Naive thymus-derived CD4-positive, alpha-beta T cell (primary cell): ENCODE measurements at regions of chr1 and their contacts with region 1.

Region 1: GRCh38 chr1:44721485-44722361 is 9.2 kb downstream of the RNU5D-1 start:
- DNase-seq: peak in 8 of 9 donors; percentile 62 to 84 (median 72)
- ATAC-seq: peak; percentile 92
- H3K4me3 ChIP-seq: peak overlapping the region; percentile 15
- H3K4me3 Mint-ChIP-seq: peak overlapping the region; percentile 53 to 87 (median 80)
- H3K27ac ChIP-seq: peak overlapping the region; percentile 64
- H3K27ac Mint-ChIP-seq: peak overlapping the region; percentile 74 to 98 (median 95)
- H3K4me1 ChIP-seq: peaks cover 26 to 73% of the 10 kb centered on the region in 2 donors
- H3K4me1 Mint-ChIP-seq: peaks cover 52 to 85% (median 74%) of the 10 kb centered on the region in 7 donors
- H3K27me3 ChIP-seq: no peaks in the 10 kb centered on the region
- H3K27me3 Mint-ChIP-seq: no peaks in the 10 kb centered on the region

Region 2: DNA sequence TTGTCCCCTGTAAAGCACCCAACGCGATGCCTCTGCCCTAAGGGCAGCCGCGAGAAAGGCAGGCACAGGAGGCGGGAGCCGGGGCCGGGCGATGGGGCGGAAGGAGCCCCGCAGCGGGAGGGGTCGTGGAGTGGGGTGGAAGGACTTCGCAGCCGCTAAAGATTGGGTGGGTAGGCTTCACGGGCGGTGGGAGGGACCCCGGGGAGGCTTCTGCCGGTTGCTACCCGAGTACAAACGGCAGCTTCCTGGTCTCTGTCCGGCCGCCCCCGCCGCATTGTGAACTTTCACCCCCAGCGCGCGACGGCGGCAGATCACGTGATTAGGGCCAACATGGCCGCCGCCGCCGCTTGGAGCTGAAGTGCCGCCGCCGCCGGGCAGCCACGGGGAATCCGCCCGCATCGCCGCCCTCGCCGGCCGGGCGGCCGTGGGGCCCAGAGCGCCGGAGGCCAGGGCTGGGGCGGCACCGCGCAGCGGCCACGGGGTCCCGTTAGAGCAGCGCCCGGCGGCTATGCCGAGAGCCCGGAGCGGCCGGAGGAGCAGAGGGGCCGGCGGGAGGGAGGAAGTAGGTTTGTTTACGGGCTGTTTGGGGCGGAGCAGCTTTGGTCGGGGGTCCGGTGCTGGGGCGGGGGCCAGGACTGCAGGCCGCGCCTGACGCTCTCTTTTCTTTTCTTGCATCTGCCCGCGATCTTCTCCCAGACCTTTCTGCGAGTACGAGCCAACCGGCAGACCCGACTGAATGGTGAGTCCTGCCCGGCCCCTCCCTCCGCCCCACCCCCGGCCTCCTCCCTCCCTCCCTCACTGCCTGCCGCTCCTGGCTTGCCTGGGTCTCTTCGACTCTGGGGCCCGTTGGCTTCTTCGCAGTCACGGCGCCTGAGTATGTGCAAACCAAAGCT is 89.8 kb before region 1 on chr1:
- CTCF ChIA-PET with region 1: no interaction called
- POLR2A ChIA-PET with region 1: interaction called, 12 read pairs
- intact Hi-C with region 1: no loop called
- DNase-seq: peak; percentile 80 to 92 (median 87)
- ATAC-seq: peak; percentile 87
- H3K4me3 ChIP-seq: peak overlapping the region; percentile 70
- H3K4me3 Mint-ChIP-seq: peak overlapping the region; percentile 69 to 95 (median 90)
- H3K27ac ChIP-seq: peak overlapping the region; percentile 85
- H3K27ac Mint-ChIP-seq: peak overlapping the region; percentile 46 to 99 (median 97)
- H3K4me1 ChIP-seq: peaks cover 8 to 13% of the 10 kb centered on the region in 2 donors
- H3K4me1 Mint-ChIP-seq: peaks cover 26 to 50% (median 39%) of the 10 kb centered on the region in 7 donors
- H3K27me3 ChIP-seq: no peaks in the 10 kb centered on the region
- H3K27me3 Mint-ChIP-seq: no peaks in the 10 kb centered on the region

Region 3: GRCh38 chr1:44696789-44697345 is 24.9 kb before region 1 on chr1:
- CTCF ChIA-PET with region 1: interaction called, 3 read pairs
- POLR2A ChIA-PET with region 1: interaction called, 15 read pairs
- intact Hi-C with region 1: no loop called
- DNase-seq: peak in 8 of 9 donors; percentile 20 to 58 (median 47)
- ATAC-seq: peak; percentile 92
- H3K4me3 ChIP-seq: no peak overlapping the region
- H3K4me3 Mint-ChIP-seq: peak overlapping the region; percentile 42 to 71 (median 62)
- H3K27ac ChIP-seq: peak overlapping the region; percentile 71
- H3K27ac Mint-ChIP-seq: peak overlapping the region; percentile 69 to 93 (median 84)
- H3K4me1 ChIP-seq: peaks cover 6 to 15% of the 10 kb centered on the region in 2 donors
- H3K4me1 Mint-ChIP-seq: peaks cover 13 to 26% (median 17%) of the 10 kb centered on the region in 7 donors
- H3K27me3 ChIP-seq: no peaks in the 10 kb centered on the region
- H3K27me3 Mint-ChIP-seq: no peaks in the 10 kb centered on the region

Region 4: GRCh38 chr1:44739361-44740178 is 17.8 kb after region 1 on chr1 and contains the start of gene KIF2C:
- CTCF ChIA-PET with region 1: interaction called, 3 read pairs
- POLR2A ChIA-PET with region 1: interaction called, 239 read pairs
- intact Hi-C with region 1: loop called in 1 of 2 experiments (anchors 1 kb)
- DNase-seq: peak; percentile 87 to 96 (median 94)
- ATAC-seq: peak; percentile 100
- H3K4me3 ChIP-seq: peak within 1 kb of the TSS; percentile 79
- H3K4me3 Mint-ChIP-seq: peak within 1 kb of the TSS; percentile 84 to 99 (median 94)
- H3K27ac ChIP-seq: peak within 1 kb of the TSS; percentile 84
- H3K27ac Mint-ChIP-seq: peak within 1 kb of the TSS; percentile 86 to 97 (median 95)
- H3K4me1 ChIP-seq: peaks cover 5 to 7% of the 10 kb centered on the region in 2 donors
- H3K4me1 Mint-ChIP-seq: peaks cover 9 to 39% (median 19%) of the 10 kb centered on the region in 7 donors
- H3K27me3 ChIP-seq: no peaks in the 10 kb centered on the region
- H3K27me3 Mint-ChIP-seq: no peaks in the 10 kb centered on the region
- total RNA-seq, gene KIF2C: 0.32 to 69.3 (median 1.1) TPM

Region 5: GRCh38 chr1:44807262-44808062 is 85.7 kb after region 1 on chr1 and contains the start of gene DYNLT4:
- CTCF ChIA-PET with region 1: no interaction called
- POLR2A ChIA-PET with region 1: interaction called, 45 read pairs
- intact Hi-C with region 1: no loop called
- DNase-seq: peak; percentile 78 to 96 (median 95)
- ATAC-seq: peak; percentile 68
- H3K4me3 ChIP-seq: peak within 1 kb of the TSS; percentile 48
- H3K4me3 Mint-ChIP-seq: peak within 1 kb of the TSS; percentile 63 to 90 (median 80)
- H3K27ac ChIP-seq: peak within 1 kb of the TSS; percentile 91
- H3K27ac Mint-ChIP-seq: peak within 1 kb of the TSS; percentile 98 to 100 (median 99)
- H3K4me1 ChIP-seq: peaks cover 66 to 67% of the 10 kb centered on the region in 2 donors
- H3K4me1 Mint-ChIP-seq: peaks cover 53 to 84% (median 77%) of the 10 kb centered on the region in 7 donors
- H3K27me3 ChIP-seq: no peaks in the 10 kb centered on the region
- H3K27me3 Mint-ChIP-seq: peaks cover 0 to 3% (median 0%) of the 10 kb centered on the region in 5 donors
- total RNA-seq, gene DYNLT4: 0.31 to 9.7 (median 0.87) TPM

Region 6: DNA sequence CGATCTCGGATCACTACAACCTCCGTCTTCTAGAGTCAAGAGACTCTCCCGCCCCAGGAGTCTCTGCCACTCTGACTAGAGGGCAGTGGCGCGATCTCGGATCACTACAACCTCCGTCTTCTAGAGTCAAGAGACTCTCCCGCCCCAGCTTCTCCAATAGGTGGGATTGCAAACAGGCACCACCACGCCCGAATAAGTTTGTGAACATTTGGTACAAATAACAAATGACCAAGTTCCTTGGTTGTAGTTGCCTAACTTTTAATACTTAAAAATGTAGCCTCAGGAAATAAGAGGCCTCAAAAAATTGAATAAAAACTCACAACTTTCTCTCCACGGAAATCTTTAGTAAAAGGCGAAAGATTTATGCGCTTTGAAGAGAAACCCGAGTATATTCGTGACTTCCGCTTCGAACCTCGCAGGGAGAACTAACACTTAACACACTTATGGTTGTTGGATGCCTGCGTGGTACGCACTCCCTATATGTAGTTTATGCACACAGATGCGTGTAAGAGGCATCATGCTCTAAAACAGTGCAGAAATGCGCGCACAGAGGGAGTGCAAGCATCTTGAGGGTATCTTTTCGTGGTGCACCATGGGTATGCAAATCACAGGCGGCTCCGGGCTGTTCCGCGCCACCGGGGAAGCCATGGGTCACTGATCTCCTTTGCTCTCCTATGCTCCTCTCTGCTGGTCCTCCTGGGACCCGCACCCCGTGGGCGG is 98.0 kb after region 1 on chr1:
- CTCF ChIA-PET with region 1: interaction called, 3 read pairs
- POLR2A ChIA-PET with region 1: interaction called, 50 read pairs
- intact Hi-C with region 1: no loop called
- DNase-seq: peak; percentile 75 to 91 (median 86)
- ATAC-seq: peak; percentile 86
- H3K4me3 ChIP-seq: peak overlapping the region; percentile 66
- H3K4me3 Mint-ChIP-seq: peak overlapping the region; percentile 91 to 96 (median 94)
- H3K27ac ChIP-seq: peak overlapping the region; percentile 92
- H3K27ac Mint-ChIP-seq: peak overlapping the region; percentile 99 to 100 (median 100)
- H3K4me1 ChIP-seq: peaks cover 0 to 21% of the 10 kb centered on the region in 2 donors
- H3K4me1 Mint-ChIP-seq: peaks cover 31 to 48% (median 45%) of the 10 kb centered on the region in 7 donors
- H3K27me3 ChIP-seq: no peaks in the 10 kb centered on the region
- H3K27me3 Mint-ChIP-seq: no peaks in the 10 kb centered on the region

Region 7: GRCh38 chr1:45339789-45340570 is 618.3 kb after region 1 on chr1 and contains the starts of genes MUTYH and TOE1:
- CTCF ChIA-PET with region 1: no interaction called
- POLR2A ChIA-PET with region 1: interaction called, 7 read pairs
- intact Hi-C with region 1: loop called in 1 of 2 experiments (anchors 2 kb)
- DNase-seq: peak; percentile 84 to 95 (median 89)
- ATAC-seq: peak; percentile 91
- H3K4me3 ChIP-seq: peak within 1 kb of the TSS; percentile 83
- H3K4me3 Mint-ChIP-seq: peak within 1 kb of the TSS; percentile 95 to 100 (median 99)
- H3K27ac ChIP-seq: peak within 1 kb of the TSS; percentile 99
- H3K27ac Mint-ChIP-seq: peak within 1 kb of the TSS; percentile 96 to 99 (median 99)
- H3K4me1 ChIP-seq: peaks cover 31 to 33% of the 10 kb centered on the region in 2 donors
- H3K4me1 Mint-ChIP-seq: peaks cover 24 to 75% (median 61%) of the 10 kb centered on the region in 7 donors
- H3K27me3 ChIP-seq: no peaks in the 10 kb centered on the region
- H3K27me3 Mint-ChIP-seq: no peaks in the 10 kb centered on the region
- total RNA-seq, gene MUTYH: 56.7 to 85.4 (median 67.7) TPM
- total RNA-seq, gene TOE1: 20.6 to 53.3 (median 25.7) TPM